Natural killer cell (primary cell): ENCODE measurements at regions of chr17 and their contacts with region 1.

Region 1: GRCh38 chr17:39668199-39668966 is at the start of gene PNMT:
- DNase-seq: peak; percentile 63 to 86
- ATAC-seq: peak; percentile 76 to 87 (median 83)
- H3K4me3 ChIP-seq: peak within 1 kb of the TSS; percentile 23
- H3K4me3 Mint-ChIP-seq: peak within 1 kb of the TSS; percentile 78
- H3K27ac ChIP-seq: no peak within 1 kb of the TSS
- H3K27ac Mint-ChIP-seq: peak within 1 kb of the TSS in 1 of 2 donors; percentile 44
- H3K4me1 ChIP-seq: peaks cover 23% of the 10 kb centered on the region
- H3K4me1 Mint-ChIP-seq: peaks cover 7 to 31% of the 10 kb centered on the region in 2 donors
- H3K27me3 ChIP-seq: peaks cover 5% of the 10 kb centered on the region
- H3K27me3 Mint-ChIP-seq: no peaks in the 10 kb centered on the region
- CTCF ChIP-seq: peak; percentile 70
- total RNA-seq, gene PNMT: 1.2 to 2.5 (median 2.2) TPM

Region 2: DNA sequence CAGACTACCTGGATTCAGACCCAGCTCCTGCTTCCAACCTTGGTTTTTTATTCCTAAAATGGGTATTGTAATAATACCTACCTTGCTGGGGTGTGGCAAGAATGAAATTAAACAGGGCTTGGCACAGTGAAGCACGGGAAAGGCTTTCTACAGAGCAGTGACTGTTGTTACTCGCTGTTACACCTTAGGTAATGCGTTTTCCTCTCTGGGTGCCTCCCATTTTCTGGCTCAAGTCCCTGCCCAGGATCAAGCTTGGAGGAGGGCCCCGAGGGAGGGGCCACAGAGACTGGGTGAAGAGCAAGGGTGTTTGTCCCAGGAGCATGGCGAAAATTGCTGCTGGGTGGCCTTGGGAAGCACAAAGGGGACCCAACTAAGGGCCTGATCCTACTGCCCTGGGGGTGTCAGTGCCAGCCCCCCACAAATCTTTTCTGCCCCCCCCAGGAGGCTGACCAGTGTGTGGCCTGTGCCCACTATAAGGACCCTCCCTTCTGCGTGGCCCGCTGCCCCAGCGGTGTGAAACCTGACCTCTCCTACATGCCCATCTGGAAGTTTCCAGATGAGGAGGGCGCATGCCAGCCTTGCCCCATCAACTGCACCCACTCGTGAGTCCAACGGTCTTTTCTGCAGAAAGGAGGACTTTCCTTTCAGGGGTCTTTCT is 48.6 kb after region 1 on chr17:
- intact Hi-C with region 1: no loop called
- DNase-seq: no peak
- ATAC-seq: no peak
- H3K4me3 ChIP-seq: no peak overlapping the region
- H3K4me3 Mint-ChIP-seq: no peak overlapping the region
- H3K27ac ChIP-seq: no peak overlapping the region
- H3K27ac Mint-ChIP-seq: peak overlapping the region in 1 of 2 donors; percentile 29
- H3K4me1 ChIP-seq: no peaks in the 10 kb centered on the region
- H3K4me1 Mint-ChIP-seq: peaks cover 9 to 13% of the 10 kb centered on the region in 2 donors
- H3K27me3 ChIP-seq: no peaks in the 10 kb centered on the region
- H3K27me3 Mint-ChIP-seq: no peaks in the 10 kb centered on the region
- CTCF ChIP-seq: no peak

Region 3: DNA sequence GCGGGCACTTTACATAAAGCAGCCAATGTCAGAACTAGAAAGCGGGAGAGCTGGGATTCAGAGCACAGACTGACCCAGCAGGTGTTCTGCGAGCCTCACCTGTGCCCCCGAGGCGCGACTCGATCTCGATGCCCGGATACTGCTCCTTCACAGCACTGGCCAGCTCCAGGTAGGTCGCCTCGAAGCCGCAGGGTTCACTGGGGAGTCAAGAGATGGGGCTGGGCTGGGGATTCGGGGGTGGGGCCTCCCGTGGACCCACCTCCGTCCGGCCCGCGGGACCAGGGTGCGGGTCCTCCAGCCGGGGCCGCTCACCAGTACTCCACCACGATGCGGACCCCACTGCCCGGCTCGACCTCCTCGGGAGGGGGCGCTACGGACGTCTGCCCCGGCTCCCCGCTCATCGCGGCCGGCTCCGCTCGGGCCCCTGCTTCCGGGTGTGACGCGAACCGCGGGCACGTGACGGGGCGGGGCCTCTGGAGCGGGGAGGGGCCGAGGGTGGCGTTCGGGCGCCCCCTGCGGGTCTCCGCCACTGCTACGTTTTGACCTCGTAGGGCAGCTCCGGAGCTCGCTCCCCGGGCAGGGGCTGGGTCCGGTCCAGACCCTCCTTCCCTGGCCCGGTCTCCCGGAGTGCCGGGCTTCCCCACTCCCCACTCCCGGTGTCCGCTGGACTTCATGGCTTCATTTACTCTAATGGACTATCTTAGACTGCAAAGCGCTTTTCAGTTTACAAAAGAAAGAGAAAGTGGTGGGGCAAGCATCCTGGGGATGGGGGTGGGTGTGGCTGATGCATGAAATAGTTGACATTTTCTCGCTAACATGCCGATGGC is 61.9 kb after region 1 on chr17 and contains the start of gene MIEN1:
- intact Hi-C with region 1: loop called (anchors 10 kb)
- DNase-seq: peak; percentile 95 to 99
- ATAC-seq: peak; percentile 94 to 99 (median 95)
- H3K4me3 ChIP-seq: peak within 1 kb of the TSS; percentile 60
- H3K4me3 Mint-ChIP-seq: peak within 1 kb of the TSS; percentile 89
- H3K27ac ChIP-seq: peak within 1 kb of the TSS; percentile 86
- H3K27ac Mint-ChIP-seq: peak within 1 kb of the TSS; percentile 89 to 96
- H3K4me1 ChIP-seq: peaks cover 20% of the 10 kb centered on the region
- H3K4me1 Mint-ChIP-seq: peaks cover 18 to 41% of the 10 kb centered on the region in 2 donors
- H3K27me3 ChIP-seq: no peaks in the 10 kb centered on the region
- H3K27me3 Mint-ChIP-seq: no peaks in the 10 kb centered on the region
- CTCF ChIP-seq: peak; percentile 90
- total RNA-seq, gene MIEN1: 48.8 to 55.2 (median 51.6) TPM